Activated T-helper 1 cell treated with anti-CD3 and anti-CD28 coated beads, Interleukin-12 subunit alpha, Interleukin-12 subunit beta, Interleukin-2, Interleukin-4 antibody, amounts not matched to agents 30 ng/mL and 10 ng/mL and 1 ng/mL, durations not matched to agents 14 hours and 24 hours and 36 hours (primary cell): ENCODE measurements at regions of chr15 and their contacts with region 1.

Region 1: GRCh38 chr15:78565097-78565951 is at the start of gene CHRNA5:
- DNase-seq: peak; percentile 44
- H3K4me3 Mint-ChIP-seq: peak within 1 kb of the TSS; percentile 88
- H3K27ac Mint-ChIP-seq: peak within 1 kb of the TSS; percentile 61
- H3K4me1 Mint-ChIP-seq: peaks cover 28% of the 10 kb centered on the region
- H3K27me3 Mint-ChIP-seq: peaks cover 31% of the 10 kb centered on the region
- total RNA-seq, gene CHRNA5: 6.4 and 10.3 TPM in 2 replicates

Region 2: DNA sequence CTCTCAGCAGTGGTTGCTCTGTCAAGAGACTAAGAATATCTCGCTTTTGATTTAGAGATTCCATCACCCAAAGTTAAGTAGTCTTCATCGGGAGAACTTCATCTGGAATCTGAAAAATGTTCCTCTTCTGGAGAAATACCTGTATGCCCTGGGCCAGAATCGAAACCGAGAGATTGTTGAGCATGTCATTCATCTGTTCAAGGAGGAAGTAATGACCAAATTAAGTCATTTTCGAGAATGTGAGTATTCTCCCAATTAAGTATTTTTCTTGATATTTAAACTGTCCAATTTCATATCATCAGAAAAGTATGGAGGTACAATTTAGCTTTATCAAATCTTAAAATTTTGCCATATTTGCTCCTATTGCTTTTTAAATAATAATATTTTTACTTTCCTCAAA is 38.0 kb before region 1 on chr15:
- intact Hi-C with region 1: no loop called
- DNase-seq: no peak
- H3K4me3 Mint-ChIP-seq: no peak overlapping the region
- H3K27ac Mint-ChIP-seq: no peak overlapping the region
- H3K4me1 Mint-ChIP-seq: no peaks in the 10 kb centered on the region
- H3K27me3 Mint-ChIP-seq: no peaks in the 10 kb centered on the region

Region 3: DNA sequence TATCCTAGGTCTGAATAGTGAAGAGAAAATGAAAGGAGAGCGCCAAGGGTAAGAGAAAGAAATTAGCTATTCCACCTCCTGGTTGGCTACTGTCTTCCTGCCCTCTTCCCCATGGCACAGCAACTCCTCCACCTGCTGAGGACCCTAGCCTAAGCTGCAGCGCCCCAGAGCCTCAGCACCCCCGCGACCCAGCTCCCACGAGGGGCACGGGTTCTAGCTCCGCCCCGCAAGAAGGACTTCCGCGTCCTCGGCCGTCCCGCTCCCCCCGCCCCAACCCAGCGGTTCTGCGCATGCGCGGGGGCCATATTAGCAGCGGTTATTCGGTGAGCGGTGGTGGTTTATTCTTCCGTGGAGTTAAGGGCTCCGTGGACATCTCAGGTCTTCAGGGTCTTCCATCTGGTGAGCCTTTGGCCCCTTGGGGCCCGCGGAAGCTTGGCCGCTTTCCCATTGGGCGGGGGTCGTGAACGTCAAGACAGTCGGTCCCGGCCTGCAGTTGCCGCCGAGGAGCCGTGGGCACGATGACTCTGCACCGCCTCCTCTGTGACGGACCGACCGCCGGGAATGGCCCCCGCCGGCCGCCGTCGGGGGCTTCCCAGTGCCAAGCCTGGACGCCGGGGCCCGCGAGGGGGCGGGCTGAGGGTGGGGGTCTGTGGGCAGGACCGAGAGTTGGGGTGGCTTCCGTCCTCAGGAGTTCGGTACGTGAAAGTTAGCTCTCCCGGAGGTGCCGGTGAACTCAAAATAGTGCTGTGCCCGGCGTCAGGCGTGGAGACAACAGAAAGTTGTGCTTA is 25.0 kb before region 1 on chr15 and contains the start of gene PSMA4:
- intact Hi-C with region 1: loop called (anchors 1 kb)
- DNase-seq: peak; percentile 92
- H3K4me3 Mint-ChIP-seq: peak within 1 kb of the TSS; percentile 97
- H3K27ac Mint-ChIP-seq: peak within 1 kb of the TSS; percentile 100
- H3K4me1 Mint-ChIP-seq: peaks cover 42% of the 10 kb centered on the region
- H3K27me3 Mint-ChIP-seq: no peaks in the 10 kb centered on the region
- total RNA-seq, gene PSMA4: 317 and 318 TPM in 2 replicates